WTC11 (cell line): ENCODE measurements at regions of chr12 and their contacts with region 1.

Region 1: DNA sequence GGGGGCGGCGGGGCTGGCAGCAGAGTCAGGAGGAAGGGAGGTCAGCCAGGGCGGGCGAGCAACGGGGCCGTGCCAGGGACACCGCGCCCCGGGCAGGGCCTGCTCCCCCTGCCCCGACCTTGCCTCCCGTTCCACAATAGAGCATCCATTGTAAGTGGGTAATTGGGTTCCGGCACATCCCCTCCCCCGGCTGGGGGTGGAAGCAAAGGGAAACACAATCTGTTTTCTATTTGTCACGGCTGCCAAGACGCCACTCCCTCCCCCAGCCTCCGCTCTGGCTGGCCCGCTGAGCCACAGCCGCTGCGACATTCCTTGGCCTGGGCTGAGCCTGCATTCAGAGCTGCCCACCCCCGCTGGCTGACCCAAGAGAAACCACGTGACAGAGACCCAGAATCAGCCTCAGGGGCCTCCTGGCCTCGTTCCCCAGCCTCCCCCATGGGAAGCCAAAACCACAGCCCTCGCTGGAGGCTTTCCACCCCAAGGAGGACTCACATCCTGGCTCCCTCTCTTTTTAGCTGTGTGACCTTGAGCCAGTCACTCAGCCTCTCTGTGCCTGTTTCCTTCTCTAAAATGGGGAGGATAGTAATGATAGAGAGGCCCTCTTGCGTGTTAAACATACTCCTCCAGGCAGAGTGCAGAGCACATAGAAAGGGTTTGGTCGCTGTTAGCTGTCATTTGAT is 117.6 kb downstream of the SCARB1 start:
- DNase-seq: peak; percentile 84
- ATAC-seq: peak; percentile 84
- H3K4me3 Mint-ChIP-seq: no peak overlapping the region; the same call in 1 of the 2 replicates
- H3K27ac Mint-ChIP-seq: peak overlapping the region; percentile 87
- H3K4me1 Mint-ChIP-seq: peaks cover 29% of the 10 kb centered on the region
- H3K27me3 Mint-ChIP-seq: no peaks in the 10 kb centered on the region; the same call in 1 of the 2 replicates
- CTCF ChIP-seq: no peak

Region 2: GRCh38 chr12:124734224-124734788 is 11.7 kb before region 1 on chr12:
- CTCF ChIA-PET with region 1: interaction called, 20 read pairs
- POLR2A ChIA-PET with region 1: no interaction called
- DNase-seq: peak; percentile 75
- ATAC-seq: peak; percentile 91
- H3K4me3 Mint-ChIP-seq: no peak overlapping the region; the same call in 1 of the 2 replicates
- H3K27ac Mint-ChIP-seq: peak overlapping the region; percentile 24
- H3K4me1 Mint-ChIP-seq: peaks cover 22% of the 10 kb centered on the region
- H3K27me3 Mint-ChIP-seq: peaks cover 3% of the 10 kb centered on the region; the same call in 1 of the 2 replicates
- CTCF ChIP-seq: no peak

Region 3: GRCh38 chr12:124795081-124795948 is 49.3 kb after region 1 on chr12:
- CTCF ChIA-PET with region 1: no interaction called
- POLR2A ChIA-PET with region 1: no interaction called
- DNase-seq: no peak
- ATAC-seq: no peak
- H3K4me3 Mint-ChIP-seq: no peak overlapping the region
- H3K27ac Mint-ChIP-seq: peak overlapping the region; percentile 81; the same call in 1 of the 2 replicates
- H3K4me1 Mint-ChIP-seq: peaks cover 15% of the 10 kb centered on the region
- H3K27me3 Mint-ChIP-seq: no peaks in the 10 kb centered on the region
- CTCF ChIP-seq: no peak